Mammary epithelial cell (primary cell): ENCODE measurements at regions of chr3 and their contacts with region 1.

Region 1: DNA sequence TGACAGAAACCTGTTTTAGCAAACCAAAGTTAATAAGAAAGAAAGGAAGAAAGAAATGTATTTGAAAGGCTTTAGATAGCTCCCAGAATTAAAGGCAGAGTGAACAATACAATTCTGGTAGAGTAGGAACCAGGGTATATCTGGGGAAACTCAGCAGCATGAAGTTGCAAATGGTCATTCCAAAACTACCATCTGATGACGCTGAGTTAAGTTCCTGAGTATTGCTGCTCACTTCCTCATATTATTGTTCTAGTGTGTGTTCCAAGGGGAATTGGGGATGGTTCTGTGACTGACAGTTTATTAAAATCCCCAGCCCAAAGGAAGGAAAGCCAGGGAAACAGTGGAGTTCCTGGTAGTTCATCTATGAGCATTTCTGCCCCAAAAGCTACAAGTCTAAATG is 88.3 kb upstream of the FRMD4B start:
- DNase-seq: no peak
- H3K4me3 ChIP-seq: no peak overlapping the region
- H3K27ac ChIP-seq: no peak overlapping the region
- H3K4me1 ChIP-seq: no peaks in the 10 kb centered on the region
- H3K27me3 ChIP-seq: no peaks in the 10 kb centered on the region
- CTCF ChIP-seq: no peak

Region 2: GRCh38 chr3:69521286-69521685 is 47.1 kb after region 1 on chr3:
- CTCF ChIA-PET with region 1: no interaction called
- dilution Hi-C with region 1: no loop called
- in situ Hi-C with region 1: no loop called
- intact Hi-C with region 1: loop called (anchors 1 kb)
- DNase-seq: no peak
- H3K4me3 ChIP-seq: no peak overlapping the region
- H3K27ac ChIP-seq: no peak overlapping the region
- H3K4me1 ChIP-seq: peaks cover 4% of the 10 kb centered on the region
- H3K27me3 ChIP-seq: no peaks in the 10 kb centered on the region
- CTCF ChIP-seq: no peak

Region 3: DNA sequence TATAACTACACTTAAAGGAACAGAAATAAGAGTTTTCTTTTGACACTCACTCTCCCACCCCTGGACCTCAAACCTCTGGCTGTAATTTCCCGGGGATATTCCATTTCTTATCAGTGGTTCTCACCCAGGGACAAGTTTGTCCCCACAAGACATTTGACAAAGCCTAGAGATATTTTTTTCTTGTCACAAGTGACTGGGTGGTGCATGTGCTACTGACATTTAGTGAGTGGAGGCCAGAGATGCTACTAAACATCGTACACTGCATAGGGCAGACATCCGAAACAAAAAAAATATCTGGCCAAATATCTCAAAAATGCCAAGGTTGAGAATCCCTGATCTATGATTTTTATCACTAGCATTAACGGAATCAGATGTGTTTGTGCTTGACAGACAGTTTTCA is 79.7 kb after region 1 on chr3:
- CTCF ChIA-PET with region 1: no interaction called
- dilution Hi-C with region 1: loop called (anchors 5 kb)
- in situ Hi-C with region 1: no loop called
- intact Hi-C with region 1: no loop called
- DNase-seq: no peak
- H3K4me3 ChIP-seq: no peak overlapping the region
- H3K27ac ChIP-seq: no peak overlapping the region
- H3K4me1 ChIP-seq: no peaks in the 10 kb centered on the region
- H3K27me3 ChIP-seq: no peaks in the 10 kb centered on the region
- CTCF ChIP-seq: no peak